ENCODE measurements at regions of chr2 and their contacts with region 1.

Region 1: GRCh38 chr2:31170071-31170698 is 31.9 kb upstream of the GALNT14 start:
- DNase-seq: peak; percentile 68
- ATAC-seq: peak; percentile 86
- H3K4me3 Mint-ChIP-seq: no peak overlapping the region
- H3K27ac Mint-ChIP-seq: no peak overlapping the region
- H3K4me1 Mint-ChIP-seq: peaks cover 4% of the 10 kb centered on the region
- H3K27me3 Mint-ChIP-seq: peaks cover 4% of the 10 kb centered on the region

Region 2: DNA sequence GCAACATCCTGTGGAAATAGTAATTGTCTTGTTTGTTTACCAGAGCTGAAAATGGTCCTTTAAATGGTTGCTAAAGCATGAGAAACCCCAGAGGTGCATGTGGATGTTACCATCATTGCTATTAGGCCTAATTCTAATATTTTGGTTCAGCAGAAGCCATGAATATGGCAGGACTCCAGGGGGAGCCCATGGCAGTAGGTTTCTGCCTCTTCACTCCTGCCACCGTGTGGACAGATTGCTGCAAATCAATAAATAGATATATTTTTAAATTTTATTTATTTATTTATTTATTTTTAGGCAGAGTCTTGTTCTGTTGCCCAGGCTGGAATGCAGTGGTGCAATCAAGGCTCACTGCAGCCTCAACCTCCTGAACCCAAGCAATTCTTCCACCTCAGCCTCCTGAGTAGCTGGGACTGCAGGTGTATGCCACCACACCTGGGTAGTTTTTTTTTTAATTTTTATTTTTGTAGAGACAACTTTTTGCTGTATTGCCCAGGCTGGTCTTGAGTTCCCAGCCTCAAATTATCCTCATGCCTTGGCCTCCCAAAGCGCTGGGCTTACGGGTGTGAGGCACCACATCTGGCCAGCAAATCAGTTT is 308.0 kb before region 1 on chr2:
- CTCF ChIA-PET with region 1: interaction called, 25 read pairs
- DNase-seq: peak; percentile 65
- ATAC-seq: no peak
- H3K4me3 Mint-ChIP-seq: no peak overlapping the region
- H3K27ac Mint-ChIP-seq: no peak overlapping the region
- H3K4me1 Mint-ChIP-seq: peaks cover 12% of the 10 kb centered on the region
- H3K27me3 Mint-ChIP-seq: peaks cover 6% of the 10 kb centered on the region

Region 3: GRCh38 chr2:31089645-31090044 is 80.5 kb before region 1 on chr2:
- CTCF ChIA-PET with region 1: interaction called, 10 read pairs
- DNase-seq: no peak
- ATAC-seq: no peak
- H3K4me3 Mint-ChIP-seq: no peak overlapping the region
- H3K27ac Mint-ChIP-seq: no peak overlapping the region
- H3K4me1 Mint-ChIP-seq: no peaks in the 10 kb centered on the region
- H3K27me3 Mint-ChIP-seq: peaks cover 5% of the 10 kb centered on the region

Region 4: GRCh38 chr2:31107591-31108300 is 62.4 kb before region 1 on chr2:
- CTCF ChIA-PET with region 1: no interaction called
- DNase-seq: no peak
- ATAC-seq: no peak
- H3K4me3 Mint-ChIP-seq: no peak overlapping the region
- H3K27ac Mint-ChIP-seq: no peak overlapping the region
- H3K4me1 Mint-ChIP-seq: no peaks in the 10 kb centered on the region
- H3K27me3 Mint-ChIP-seq: peaks cover 35% of the 10 kb centered on the region

Region 5: GRCh38 chr2:31138037-31138962 is 31.9 kb before region 1 on chr2 and contains the start of gene GALNT14:
- CTCF ChIA-PET with region 1: interaction called, 10 read pairs
- DNase-seq: peak; percentile 57
- ATAC-seq: peak; percentile 77
- H3K4me3 Mint-ChIP-seq: peak within 1 kb of the TSS; percentile 43
- H3K27ac Mint-ChIP-seq: no peak within 1 kb of the TSS
- H3K4me1 Mint-ChIP-seq: peaks cover 8% of the 10 kb centered on the region
- H3K27me3 Mint-ChIP-seq: peaks cover 72% of the 10 kb centered on the region
- total RNA-seq, gene GALNT14: 0.42 TPM in 1 of 2 experiments, not detected in the other

Region 6: GRCh38 chr2:31151501-31151900 is 18.7 kb before region 1 on chr2:
- CTCF ChIA-PET with region 1: interaction called, 22 read pairs
- DNase-seq: no peak
- ATAC-seq: no peak
- H3K4me3 Mint-ChIP-seq: no peak overlapping the region
- H3K27ac Mint-ChIP-seq: no peak overlapping the region
- H3K4me1 Mint-ChIP-seq: no peaks in the 10 kb centered on the region
- H3K27me3 Mint-ChIP-seq: peaks cover 41% of the 10 kb centered on the region

Region 7: GRCh38 chr2:31333527-31334183 is 163.5 kb after region 1 on chr2:
- CTCF ChIA-PET with region 1: interaction called, 23 read pairs
- DNase-seq: peak; percentile 87
- ATAC-seq: peak; percentile 94
- H3K4me3 Mint-ChIP-seq: no peak overlapping the region
- H3K27ac Mint-ChIP-seq: no peak overlapping the region
- H3K4me1 Mint-ChIP-seq: no peaks in the 10 kb centered on the region
- H3K27me3 Mint-ChIP-seq: peaks cover 9% of the 10 kb centered on the region

Region 8: DNA sequence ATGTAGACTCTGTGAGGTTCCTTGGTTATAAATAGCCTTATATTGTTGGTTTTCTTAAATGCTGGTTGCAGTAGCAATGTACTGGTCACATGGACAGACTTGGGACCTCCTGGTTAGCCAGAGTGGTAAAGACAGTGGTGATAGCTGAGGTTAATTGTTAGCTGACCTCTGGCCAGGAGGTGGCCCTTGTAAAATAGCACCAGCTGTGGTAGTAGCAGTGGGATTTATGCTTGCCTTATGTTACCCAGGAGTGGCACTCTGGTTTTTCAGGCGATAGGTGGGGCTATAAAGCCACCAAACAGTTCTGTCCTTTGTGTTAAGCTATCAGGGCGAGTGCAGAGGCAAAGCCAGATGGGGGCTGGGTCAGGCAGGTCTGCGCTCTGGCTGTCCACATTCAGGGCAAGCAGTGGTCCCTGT is 505.3 kb after region 1 on chr2:
- CTCF ChIA-PET with region 1: no interaction called
- DNase-seq: no peak
- ATAC-seq: no peak
- H3K4me3 Mint-ChIP-seq: no peak overlapping the region
- H3K27ac Mint-ChIP-seq: no peak overlapping the region
- H3K4me1 Mint-ChIP-seq: no peaks in the 10 kb centered on the region
- H3K27me3 Mint-ChIP-seq: peaks cover 14% of the 10 kb centered on the region

Measured in activated CD8-positive, alpha-beta memory T cell treated with anti-CD3 and anti-CD28 coated beads, Interleukin-2, amount 10 ng/mL, durations not matched to agents 7 days and 5 days (primary cell).